ENCODE measurements at regions of chr1 and their contacts with region 1.

Region 1: DNA sequence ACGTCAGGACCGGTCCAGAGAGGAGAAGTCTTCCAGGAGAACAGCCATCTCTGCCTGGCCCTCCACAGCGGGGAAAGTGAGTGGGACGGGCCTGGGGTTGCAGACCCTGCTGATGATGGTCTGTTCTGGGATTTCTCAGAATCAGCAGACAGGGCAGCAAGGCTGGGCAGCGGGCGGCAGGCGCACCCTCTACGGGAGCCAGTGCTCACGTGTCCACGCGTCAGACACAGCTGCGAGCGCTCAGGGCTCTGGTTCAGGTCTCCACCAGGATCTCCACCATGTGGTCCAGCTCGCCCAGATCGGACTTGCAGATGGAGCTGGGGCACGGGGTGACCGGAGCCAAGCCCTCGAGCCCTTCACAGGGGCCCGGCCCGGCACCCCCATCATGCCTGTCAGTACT is 5.5 kb downstream of the CLCA4 start:
- DNase-seq: no peak
- H3K4me3 ChIP-seq: no peak overlapping the region
- H3K27ac ChIP-seq: no peak overlapping the region
- H3K4me1 ChIP-seq: no peaks in the 10 kb centered on the region
- H3K27me3 ChIP-seq: no peaks in the 10 kb centered on the region
- CTCF ChIP-seq: no peak
- POLR2A ChIP-seq: no peak

Region 2: DNA sequence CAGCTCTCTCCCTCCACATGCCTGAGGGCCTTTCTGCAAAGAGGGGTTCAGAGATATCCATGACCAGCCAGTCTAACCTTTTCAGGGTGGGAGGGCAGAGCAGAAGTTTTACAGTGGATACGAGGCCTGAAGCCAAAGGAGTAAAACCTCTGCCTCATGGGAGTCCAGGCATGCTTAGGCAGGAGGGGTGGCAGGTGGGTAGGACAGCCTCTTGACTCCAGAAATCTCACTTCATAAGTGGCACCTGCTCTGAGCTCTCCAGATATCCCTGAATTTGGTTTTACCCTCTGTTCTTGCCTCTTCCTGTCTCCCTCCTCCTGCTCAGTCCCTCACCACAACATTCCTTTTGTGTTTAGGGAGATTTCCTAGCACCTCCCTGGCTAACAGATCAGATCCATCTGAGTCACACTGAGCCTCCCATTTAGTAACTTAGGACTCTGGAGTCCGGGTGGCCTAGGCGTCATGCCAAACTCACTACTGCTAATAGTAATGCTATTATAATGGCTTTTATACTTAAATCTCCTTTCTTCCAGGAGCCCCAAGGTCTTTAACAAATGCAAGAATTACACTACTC is 563.0 kb after region 1 on chr1:
- intact Hi-C with region 1: loop called (anchors 10 kb)
- DNase-seq: no peak
- H3K4me3 ChIP-seq: no peak overlapping the region
- H3K27ac ChIP-seq: no peak overlapping the region
- H3K4me1 ChIP-seq: no peaks in the 10 kb centered on the region
- H3K27me3 ChIP-seq: no peaks in the 10 kb centered on the region
- CTCF ChIP-seq: no peak
- POLR2A ChIP-seq: no peak